ENCODE measurements at regions of chr9 and their contacts with region 1.

Region 1: DNA sequence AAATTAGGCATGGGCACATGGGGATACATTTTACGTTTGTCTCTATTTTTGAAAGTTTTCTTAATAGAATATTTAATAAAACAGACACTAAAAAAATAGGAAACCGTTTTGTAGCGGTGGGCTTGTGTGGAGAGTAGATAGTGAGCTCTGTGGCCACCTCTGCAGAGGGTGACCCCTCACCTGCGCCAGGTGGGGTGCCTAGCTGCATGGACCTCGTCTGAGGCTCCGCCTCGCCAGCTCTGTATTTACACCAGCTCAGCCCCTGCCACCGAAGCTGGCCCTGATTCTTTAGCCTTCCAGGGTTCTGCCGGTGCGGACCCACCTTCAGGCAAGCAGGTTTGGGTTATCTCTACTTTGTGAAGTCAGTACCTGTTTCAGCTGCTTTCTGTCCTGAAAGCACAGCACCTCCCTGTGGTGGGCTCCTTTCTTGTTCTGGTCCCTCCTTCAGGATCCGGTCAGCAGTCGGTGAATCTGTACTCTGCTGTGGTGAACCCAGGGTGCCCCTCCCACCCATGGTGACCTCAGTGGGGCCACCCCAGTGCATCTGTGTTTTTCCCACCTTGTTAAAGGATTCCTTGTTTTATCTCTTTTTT is 105.2 kb upstream of the CACNA1B start:
- DNase-seq: peak; percentile 42
- H3K4me3 ChIP-seq: no peak overlapping the region
- H3K27ac ChIP-seq: no peak overlapping the region
- H3K4me1 ChIP-seq: peaks cover 0 to 11% (median 0%) of the 10 kb centered on the region in 6 donors
- H3K27me3 ChIP-seq: no peaks in the 10 kb centered on the region
- CTCF ChIP-seq: peak in 5 of 11 experiments; percentile 8 to 17 (median 14)
- POLR2A ChIP-seq: no peak

Region 2: DNA sequence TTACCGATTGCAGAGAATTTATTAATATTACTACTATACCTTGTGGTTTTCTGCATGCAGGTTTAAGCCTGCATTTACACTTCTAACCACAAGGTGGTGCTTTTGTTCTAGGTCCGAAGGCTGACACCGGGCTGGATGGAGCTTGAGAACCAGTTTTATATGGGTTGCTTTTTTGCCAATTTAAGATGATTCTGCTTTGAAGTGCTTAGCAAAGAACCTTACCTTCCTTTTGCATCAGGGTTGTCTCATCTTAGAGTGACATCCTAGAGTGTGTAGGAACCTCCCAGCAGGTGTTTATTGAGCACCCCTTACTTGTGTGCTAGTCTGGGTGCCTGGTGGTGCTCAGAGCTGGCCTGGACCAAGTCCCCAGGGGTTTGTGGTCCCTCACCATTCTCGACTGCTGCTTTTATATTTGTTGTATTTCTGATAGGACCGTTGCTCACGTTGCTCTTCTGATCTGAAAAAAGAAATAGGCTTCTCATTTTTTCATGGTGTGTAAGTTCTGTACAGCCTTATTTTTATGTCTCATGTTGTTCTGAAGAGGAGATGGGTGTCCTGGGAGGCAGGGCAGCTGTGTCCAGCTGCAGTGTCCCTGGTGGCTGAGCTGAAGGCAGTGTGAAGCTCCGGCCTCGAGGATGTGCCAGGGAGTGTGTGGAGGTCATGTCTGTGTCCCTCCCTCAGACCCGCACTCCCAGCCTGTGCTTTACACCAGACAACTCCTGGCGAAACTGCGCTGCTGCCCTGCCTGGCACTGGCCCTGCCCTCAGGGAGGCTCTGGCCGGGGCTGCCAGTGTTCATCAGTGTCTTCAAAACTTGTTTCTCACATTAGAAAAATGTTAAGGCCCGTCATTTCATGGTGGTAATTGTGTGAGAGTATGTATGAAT is 99.2 kb before region 1 on chr9:
- intact Hi-C with region 1: loop called (anchors 10 kb)
- DNase-seq: peak; percentile 76
- H3K4me3 ChIP-seq: no peak overlapping the region
- H3K27ac ChIP-seq: peak overlapping the region in 6 of 8 donors; percentile 16 to 72 (median 56)
- H3K4me1 ChIP-seq: peaks cover 10 to 92% (median 49%) of the 10 kb centered on the region in 6 donors
- H3K27me3 ChIP-seq: no peaks in the 10 kb centered on the region
- CTCF ChIP-seq: peak; percentile 66 to 91 (median 85)
- POLR2A ChIP-seq: no peak

Region 3: DNA sequence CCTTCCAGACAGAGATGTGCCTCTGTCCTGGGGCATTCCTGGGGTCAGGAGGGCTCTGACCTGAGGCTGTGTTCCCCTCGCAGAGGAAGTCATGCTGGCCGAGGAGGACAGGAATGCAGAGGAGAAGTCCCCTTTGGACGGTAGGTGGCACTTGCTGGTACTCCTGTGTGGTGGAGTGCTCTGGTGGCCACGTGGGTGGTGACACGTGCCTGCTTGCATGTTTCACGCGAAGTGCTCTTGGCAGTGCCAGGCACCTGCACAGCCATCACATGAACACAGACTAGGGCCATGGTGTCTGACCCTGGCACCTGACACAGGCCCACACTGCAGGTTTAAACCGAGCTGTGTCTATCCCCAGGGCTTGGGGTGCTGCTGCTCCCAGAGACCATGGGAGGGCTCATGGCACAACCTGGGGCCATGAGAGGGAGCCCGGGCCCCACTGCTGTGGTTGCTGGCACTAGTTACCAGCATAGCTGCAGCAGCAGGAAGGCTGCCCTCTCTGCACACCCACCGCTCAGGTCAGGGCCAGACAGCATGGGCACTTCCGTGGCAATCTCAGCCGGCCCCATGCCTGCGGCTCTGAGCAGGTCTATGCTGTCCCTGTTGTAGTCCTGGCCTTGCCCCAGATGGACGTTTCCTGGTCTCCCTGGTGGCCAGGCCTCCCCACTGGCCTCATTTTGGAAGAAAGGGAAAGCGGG is 184.5 kb after region 1 on chr9:
- intact Hi-C with region 1: no loop called
- DNase-seq: no peak
- H3K4me3 ChIP-seq: no peak overlapping the region
- H3K27ac ChIP-seq: no peak overlapping the region
- H3K4me1 ChIP-seq: no peaks in the 10 kb centered on the region
- H3K27me3 ChIP-seq: peaks cover 0 to 19% (median 0%) of the 10 kb centered on the region in 7 donors
- CTCF ChIP-seq: no peak
- POLR2A ChIP-seq: no peak

Region 4: GRCh38 chr9:138112791-138113600 is 340.6 kb after region 1 on chr9:
- intact Hi-C with region 1: no loop called
- DNase-seq: no peak
- H3K4me3 ChIP-seq: no peak overlapping the region
- H3K27ac ChIP-seq: no peak overlapping the region
- H3K4me1 ChIP-seq: no peaks in the 10 kb centered on the region
- H3K27me3 ChIP-seq: peaks cover 0 to 23% (median 0%) of the 10 kb centered on the region in 7 donors
- CTCF ChIP-seq: no peak
- POLR2A ChIP-seq: no peak